Activated T-helper 1 cell treated with anti-CD3 and anti-CD28 coated beads, Interleukin-12 subunit alpha, Interleukin-12 subunit beta, Interleukin-2, Interleukin-4 antibody, amounts not matched to agents 30 ng/mL and 10 ng/mL and 1 ng/mL, durations not matched to agents 14 hours and 24 hours and 36 hours (primary cell): ENCODE measurements at regions of chr7 and their contacts with region 1.

Region 1: DNA sequence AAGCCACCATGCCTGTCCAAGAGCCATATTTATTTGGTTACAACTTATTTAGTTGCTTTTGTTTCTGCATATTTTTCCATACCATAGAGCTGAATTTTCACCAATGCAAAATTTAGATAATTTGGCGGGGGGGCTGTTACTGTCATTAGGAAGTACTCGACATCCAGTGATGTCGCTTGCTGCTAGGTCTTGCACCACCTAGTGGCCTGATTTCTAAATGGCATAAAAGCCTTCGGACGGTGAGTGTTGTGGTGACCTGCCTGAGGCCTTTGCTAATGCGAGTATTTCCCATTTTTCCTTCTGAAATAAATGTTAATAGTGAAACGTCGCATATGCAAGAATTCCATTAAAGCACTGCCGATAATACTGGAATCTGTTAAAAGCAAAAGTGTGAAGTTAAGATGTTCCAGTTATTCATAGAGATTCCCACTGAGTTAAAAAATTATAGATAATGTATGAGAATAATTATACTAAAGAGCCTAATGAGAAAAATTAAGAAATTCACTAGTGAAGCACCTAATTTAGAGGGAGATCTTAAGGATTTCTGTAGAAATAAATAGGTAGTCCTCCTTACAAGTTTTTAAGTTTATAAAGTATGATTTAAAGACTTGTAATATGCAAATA is 86.1 kb upstream of the DNAJB6 start:
- DNase-seq: peak; percentile 31
- H3K4me3 Mint-ChIP-seq: no peak overlapping the region
- H3K27ac Mint-ChIP-seq: no peak overlapping the region
- H3K4me1 Mint-ChIP-seq: no peaks in the 10 kb centered on the region
- H3K27me3 Mint-ChIP-seq: no peaks in the 10 kb centered on the region

Region 2: GRCh38 chr7:156456503-156457115 is 794.1 kb before region 1 on chr7:
- intact Hi-C with region 1: no loop called
- DNase-seq: no peak
- H3K4me3 Mint-ChIP-seq: no peak overlapping the region
- H3K27ac Mint-ChIP-seq: no peak overlapping the region
- H3K4me1 Mint-ChIP-seq: peaks cover 4% of the 10 kb centered on the region
- H3K27me3 Mint-ChIP-seq: peaks cover 9% of the 10 kb centered on the region

Region 3: GRCh38 chr7:156903232-156903909 is 347.3 kb before region 1 on chr7:
- intact Hi-C with region 1: loop called (anchors 5 kb)
- DNase-seq: no peak
- H3K4me3 Mint-ChIP-seq: no peak overlapping the region
- H3K27ac Mint-ChIP-seq: no peak overlapping the region
- H3K4me1 Mint-ChIP-seq: peaks cover 7% of the 10 kb centered on the region
- H3K27me3 Mint-ChIP-seq: peaks cover 5% of the 10 kb centered on the region

Region 4: DNA sequence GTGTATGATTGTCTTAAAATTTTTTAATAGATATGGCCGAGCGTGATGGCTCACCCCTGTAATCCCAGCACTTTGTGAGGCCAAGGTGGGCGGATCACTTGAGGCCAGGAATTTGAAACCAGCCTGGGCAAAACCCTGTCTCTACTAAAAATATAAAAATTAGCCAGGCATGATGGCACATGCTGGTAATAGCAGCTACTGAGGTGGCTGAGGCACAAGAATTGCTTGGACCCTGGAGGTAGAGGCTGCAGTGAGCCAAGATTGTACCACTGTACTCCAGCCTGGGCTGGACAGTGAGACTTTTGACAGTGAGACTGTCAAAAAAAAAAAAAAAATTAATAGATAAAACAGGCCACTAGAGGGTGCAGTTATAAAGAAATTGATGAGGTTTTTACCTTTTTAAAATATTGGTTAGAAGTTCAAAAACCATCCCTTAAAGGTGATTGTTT is 280.7 kb before region 1 on chr7:
- intact Hi-C with region 1: loop called (anchors 5 kb)
- DNase-seq: no peak
- H3K4me3 Mint-ChIP-seq: no peak overlapping the region
- H3K27ac Mint-ChIP-seq: no peak overlapping the region
- H3K4me1 Mint-ChIP-seq: no peaks in the 10 kb centered on the region
- H3K27me3 Mint-ChIP-seq: no peaks in the 10 kb centered on the region